AG04449 (cell line): ENCODE measurements at regions of chr2 and their contacts with region 1.

Region 1: GRCh38 chr2:127324635-127325034 is 30.7 kb upstream of the ERCC3 start:
- DNase-seq: no peak
- H3K4me3 ChIP-seq: no peak overlapping the region
- CTCF ChIP-seq: peak; percentile 54

Region 2: DNA sequence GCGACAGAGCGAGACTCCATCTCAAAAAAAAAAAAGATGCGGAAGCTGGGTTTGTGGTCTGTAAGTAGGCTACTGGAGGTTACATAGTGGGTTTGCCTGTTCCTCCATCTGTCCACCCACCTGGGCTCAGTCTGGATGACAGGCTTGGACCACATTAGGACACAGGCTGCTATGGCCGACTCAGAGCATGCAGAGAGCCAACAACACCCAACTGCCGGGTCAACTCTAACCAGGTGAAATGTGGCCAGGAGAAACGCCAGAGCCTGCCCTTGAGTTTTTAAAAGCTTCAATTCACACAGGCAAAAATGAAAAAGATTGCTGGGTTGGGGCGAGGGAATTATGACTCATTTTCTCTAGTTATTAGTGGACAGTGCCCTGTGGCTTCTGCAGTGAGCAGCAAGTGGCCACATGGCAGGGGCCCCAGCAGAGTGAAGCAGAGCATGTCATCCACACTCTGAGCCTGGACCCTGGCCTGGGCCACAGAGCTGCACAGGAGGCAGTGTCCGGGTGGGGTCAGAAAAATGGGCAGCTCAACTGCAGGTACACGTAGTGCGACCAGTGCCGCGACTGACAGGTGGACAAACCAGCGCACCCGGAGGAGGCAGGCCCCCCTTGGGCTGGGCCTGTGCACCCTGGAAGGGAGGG is 285.1 kb before region 1 on chr2:
- CTCF ChIA-PET with region 1: no interaction called
- POLR2A ChIA-PET with region 1: no interaction called
- DNase-seq: no peak
- H3K4me3 ChIP-seq: no peak overlapping the region
- CTCF ChIP-seq: no peak

Region 3: GRCh38 chr2:127293748-127294562 is 30.7 kb before region 1 on chr2 and contains the start of gene ERCC3:
- CTCF ChIA-PET with region 1: interaction called, 11 read pairs
- POLR2A ChIA-PET with region 1: no interaction called
- DNase-seq: peak; percentile 4
- H3K4me3 ChIP-seq: peak within 1 kb of the TSS; percentile 96
- CTCF ChIP-seq: no peak

Region 4: DNA sequence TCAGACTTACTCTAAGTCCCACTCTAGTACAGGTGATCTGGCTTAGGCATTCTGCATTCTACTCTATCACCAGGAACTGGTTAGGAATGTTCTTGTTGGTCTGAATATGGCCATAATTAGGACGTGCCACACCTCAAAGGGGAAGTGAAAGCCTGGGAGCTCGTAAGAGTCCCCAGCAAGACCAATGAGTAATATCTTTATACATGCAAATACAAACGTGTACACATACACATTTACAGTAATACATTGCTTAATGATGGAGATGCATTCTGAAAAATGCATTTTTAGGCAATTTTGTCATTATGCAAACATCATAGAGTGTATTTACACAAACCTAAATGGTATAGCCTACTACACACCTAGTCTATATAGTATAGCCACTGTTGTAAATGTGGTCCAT is 11.2 kb before region 1 on chr2:
- CTCF ChIA-PET with region 1: interaction called, 21 read pairs
- POLR2A ChIA-PET with region 1: no interaction called
- DNase-seq: no peak
- H3K4me3 ChIP-seq: no peak overlapping the region
- CTCF ChIP-seq: no peak

Region 5: DNA sequence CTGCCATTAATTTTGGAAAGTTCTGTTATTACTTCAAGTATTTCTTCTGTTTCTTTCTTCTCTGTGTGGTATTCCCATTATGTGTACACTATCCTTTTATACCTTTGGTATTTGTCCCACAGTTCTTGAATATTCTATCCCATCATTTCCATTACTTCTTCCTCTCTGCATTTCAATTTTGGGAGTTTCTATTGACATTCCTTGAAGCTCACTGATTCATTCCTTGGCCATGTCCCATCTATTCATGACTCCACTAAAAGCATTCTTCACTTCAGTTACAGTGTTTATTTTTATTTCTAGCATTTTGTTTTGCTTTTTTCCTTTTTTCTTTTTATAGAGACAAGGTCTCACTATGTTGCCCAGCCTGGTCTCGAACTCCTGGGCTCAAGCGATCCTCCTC is 123.9 kb after region 1 on chr2:
- CTCF ChIA-PET with region 1: interaction called, 41 read pairs
- POLR2A ChIA-PET with region 1: no interaction called
- DNase-seq: peak; percentile 17
- H3K4me3 ChIP-seq: no peak overlapping the region
- CTCF ChIP-seq: no peak

Region 6: DNA sequence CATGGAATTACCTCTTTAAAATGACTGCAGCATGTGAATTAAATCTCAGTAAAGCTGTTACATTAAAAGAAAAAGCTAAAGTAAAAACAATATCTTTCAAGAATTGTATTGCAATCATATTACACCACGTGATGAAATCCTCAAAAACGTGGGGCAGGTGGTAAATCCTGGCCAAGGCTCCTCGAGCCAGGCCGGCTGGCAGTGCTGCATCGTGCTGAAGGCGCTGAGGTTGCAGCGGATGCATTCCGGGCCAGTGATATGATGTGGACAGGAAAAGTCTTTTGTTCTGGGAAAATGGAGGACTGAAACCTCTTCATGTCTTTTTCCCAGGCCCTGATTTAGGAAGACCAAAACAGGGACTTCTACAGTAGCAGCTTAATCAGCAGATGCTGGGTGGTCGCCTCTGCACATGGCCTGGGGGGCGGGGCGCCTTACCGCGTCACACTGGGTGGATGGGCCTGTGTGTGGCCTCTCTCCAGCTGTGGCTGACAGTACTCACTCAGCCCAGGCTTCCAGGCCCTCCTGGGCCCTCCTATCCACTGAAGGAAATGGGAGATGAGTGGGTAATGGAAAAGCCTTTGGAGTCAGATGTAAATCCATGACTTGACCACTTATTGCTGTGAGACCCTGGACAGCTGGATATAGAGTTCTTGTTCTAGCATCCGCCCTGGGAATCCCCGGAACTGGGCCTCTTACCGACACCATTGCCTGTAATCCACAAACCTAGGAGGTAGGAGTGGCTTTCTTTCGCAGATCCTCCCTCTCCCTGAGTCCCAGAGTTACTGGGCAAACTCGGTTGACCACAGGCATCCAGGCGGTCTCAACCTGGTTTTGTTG is 138.7 kb after region 1 on chr2:
- CTCF ChIA-PET with region 1: interaction called, 11 read pairs
- POLR2A ChIA-PET with region 1: no interaction called
- DNase-seq: no peak
- H3K4me3 ChIP-seq: no peak overlapping the region
- CTCF ChIP-seq: no peak

Region 7: GRCh38 chr2:127508631-127509034 is 184.0 kb after region 1 on chr2:
- CTCF ChIA-PET with region 1: interaction called, 15 read pairs
- POLR2A ChIA-PET with region 1: no interaction called
- DNase-seq: peak; percentile 98
- H3K4me3 ChIP-seq: no peak overlapping the region
- CTCF ChIP-seq: no peak

Region 8: DNA sequence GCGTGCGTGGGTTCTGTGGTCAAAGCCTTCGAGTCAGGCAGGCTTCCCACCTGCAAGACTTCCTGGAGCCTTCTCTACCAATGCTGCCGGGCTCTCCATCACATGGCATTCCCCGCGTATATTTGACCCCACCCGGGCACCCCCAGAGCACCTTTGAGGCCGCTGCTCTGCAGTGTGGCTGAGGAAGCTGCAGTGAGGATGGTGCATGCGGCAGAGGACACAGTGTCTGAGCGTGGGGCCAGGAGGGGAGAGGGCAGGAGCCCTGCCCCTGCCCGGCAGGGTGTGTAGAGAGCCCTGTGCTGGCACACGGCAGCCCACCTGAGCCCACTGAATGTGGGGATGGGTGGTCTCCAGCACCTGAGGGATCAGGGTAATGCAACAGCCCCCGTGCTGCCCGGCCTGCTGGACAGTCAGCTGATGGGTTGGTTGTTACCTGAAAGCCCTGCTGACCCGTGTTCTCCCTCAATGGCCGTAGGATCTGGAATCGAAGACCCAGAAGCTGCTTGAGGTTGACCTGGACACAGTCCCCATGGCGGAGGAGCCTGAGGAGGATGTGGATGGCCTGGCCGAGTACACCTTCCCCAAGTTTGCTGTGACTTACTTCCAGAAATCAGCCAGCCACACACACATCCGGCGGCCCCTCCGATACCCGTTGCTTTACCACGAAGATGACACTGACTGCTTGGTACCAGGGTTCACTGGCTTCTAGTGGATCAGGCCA is 284.6 kb after region 1 on chr2:
- CTCF ChIA-PET with region 1: no interaction called
- POLR2A ChIA-PET with region 1: no interaction called
- DNase-seq: no peak
- H3K4me3 ChIP-seq: no peak overlapping the region
- CTCF ChIP-seq: no peak